Activated CD4-positive, alpha-beta T cell treated with anti-CD3 and anti-CD28 coated beads, Interleukin-2, amount 10 ng/mL, durations not matched to agents 24 days and 14 days (primary cell): ENCODE measurements at regions of chr6 and their contacts with region 1.

Region 1: GRCh38 chr6:31597006-31597405 is 4.2 kb upstream of the NCR3 start:
- DNase-seq: peak; percentile 84
- H3K4me3 Mint-ChIP-seq: no peak overlapping the region
- H3K27ac Mint-ChIP-seq: no peak overlapping the region
- H3K4me1 Mint-ChIP-seq: peaks cover 41% of the 10 kb centered on the region
- H3K27me3 Mint-ChIP-seq: no peaks in the 10 kb centered on the region

Region 2: DNA sequence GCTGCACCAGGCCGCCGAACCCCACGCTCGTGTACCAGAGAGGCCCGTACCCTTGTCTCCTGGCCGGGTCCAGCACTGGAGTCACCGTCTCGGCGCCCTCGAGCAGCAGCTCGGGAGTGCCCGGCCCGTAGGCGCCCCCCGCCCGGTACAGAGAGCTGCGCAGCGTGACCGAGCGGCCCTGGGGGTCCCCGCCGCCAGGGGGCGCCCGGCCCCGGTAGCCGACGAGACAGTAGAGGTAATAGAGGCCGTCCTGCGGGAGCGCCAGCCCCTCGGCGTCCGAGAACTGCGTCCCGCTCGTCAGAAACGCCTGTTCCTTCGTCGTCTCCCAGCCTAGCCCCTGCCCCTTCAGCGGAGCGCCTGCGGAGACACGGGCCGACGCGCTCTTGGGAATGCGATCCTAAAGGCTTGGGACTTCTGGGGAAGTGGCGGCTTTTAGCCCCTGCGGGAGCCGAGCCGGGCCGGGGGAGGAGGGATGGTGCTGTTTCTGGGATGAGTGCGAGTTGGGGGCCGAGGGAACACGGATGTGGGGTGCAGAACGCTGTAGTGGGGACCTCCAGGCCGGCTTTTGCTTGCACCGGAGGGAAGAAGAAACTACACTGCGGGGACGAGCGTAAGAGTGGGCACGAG is 16.1 kb before region 1 on chr6:
- intact Hi-C with region 1: loop called (anchors 1 kb)
- DNase-seq: peak; percentile 96
- H3K4me3 Mint-ChIP-seq: peak overlapping the region; percentile 94
- H3K27ac Mint-ChIP-seq: peak overlapping the region; percentile 91
- H3K4me1 Mint-ChIP-seq: peaks cover 62% of the 10 kb centered on the region
- H3K27me3 Mint-ChIP-seq: no peaks in the 10 kb centered on the region